ENCODE measurements at regions of chr19 and their contacts with region 1.

Region 1: DNA sequence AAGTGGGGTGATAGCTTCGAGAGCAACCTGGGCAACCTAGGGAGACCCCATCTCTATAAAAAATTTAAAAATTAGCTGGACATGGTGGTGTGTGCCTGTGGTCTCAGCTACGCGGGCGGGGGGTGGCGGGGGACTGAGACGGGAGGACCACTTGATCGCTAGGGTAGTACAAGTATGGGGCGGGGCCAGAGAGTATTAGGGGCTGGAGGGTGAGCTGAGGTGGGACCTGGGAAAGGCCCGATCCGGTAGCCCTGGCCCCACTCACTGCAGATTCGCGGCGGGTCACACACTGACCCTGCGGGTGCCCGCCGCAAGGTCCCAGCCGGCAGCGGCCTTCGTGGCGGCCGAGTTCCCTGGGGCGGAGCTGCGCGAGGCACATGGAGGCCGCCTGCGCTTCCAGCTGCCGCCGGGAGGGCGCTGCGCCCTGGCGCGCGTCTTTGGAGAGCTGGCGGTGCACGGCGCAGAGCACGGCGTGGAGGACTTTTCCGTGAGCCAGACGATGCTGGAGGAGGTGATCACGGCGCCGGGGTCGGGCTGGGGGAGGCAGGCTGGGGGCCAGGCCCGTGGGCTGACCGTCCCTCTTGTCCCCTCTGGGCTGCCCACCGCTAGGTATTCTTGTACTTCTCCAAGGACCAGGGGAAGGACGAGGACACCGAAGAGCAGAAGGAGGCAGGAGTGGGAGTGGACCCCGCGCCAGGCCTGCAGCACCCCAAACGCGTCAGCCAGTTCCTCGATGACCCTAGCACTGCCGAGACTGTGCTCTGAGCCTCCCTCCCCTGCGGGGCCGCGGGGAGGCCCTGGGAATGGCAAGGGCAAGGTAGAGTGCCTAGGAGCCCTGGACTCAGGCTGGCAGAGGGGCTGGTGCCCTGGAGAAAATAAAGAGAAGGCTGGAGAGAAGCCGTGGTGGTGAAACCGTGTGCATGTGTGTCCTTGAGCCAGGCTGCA is 2.0 kb upstream of the ARHGAP45 start:
- DNase-seq: peak; percentile 64 to 73 (median 71)
- H3K4me3 ChIP-seq: no peak overlapping the region
- H3K4me3 Mint-ChIP-seq: peak overlapping the region; percentile 57 to 78 (median 69)
- H3K27ac ChIP-seq: no peak overlapping the region
- H3K27ac Mint-ChIP-seq: peak overlapping the region; percentile 53 to 95 (median 86)
- H3K4me1 ChIP-seq: peaks cover 43% of the 10 kb centered on the region
- H3K4me1 Mint-ChIP-seq: peaks cover 21 to 56% (median 36%) of the 10 kb centered on the region in 4 donors
- H3K27me3 ChIP-seq: no peaks in the 10 kb centered on the region
- H3K27me3 Mint-ChIP-seq: no peaks in the 10 kb centered on the region

Region 2: GRCh38 chr19:1020868-1021425 is 44.0 kb before region 1 on chr19 and contains the start of gene TMEM259:
- CTCF ChIA-PET with region 1: interaction called, 10 read pairs
- POLR2A ChIA-PET with region 1: interaction called, 1,029 read pairs
- intact Hi-C with region 1: loop called (anchors 2 kb)
- DNase-seq: peak; percentile 98 to 99 (median 98)
- H3K4me3 ChIP-seq: peak within 1 kb of the TSS; percentile 66 to 69
- H3K4me3 Mint-ChIP-seq: peak within 1 kb of the TSS; percentile 86 to 92 (median 89)
- H3K27ac ChIP-seq: peak within 1 kb of the TSS; percentile 95
- H3K27ac Mint-ChIP-seq: peak within 1 kb of the TSS; percentile 97 to 100 (median 100)
- H3K4me1 ChIP-seq: peaks cover 54% of the 10 kb centered on the region
- H3K4me1 Mint-ChIP-seq: peaks cover 19 to 62% (median 39%) of the 10 kb centered on the region in 4 donors
- H3K27me3 ChIP-seq: no peaks in the 10 kb centered on the region
- H3K27me3 Mint-ChIP-seq: peaks cover 0 to 6% of the 10 kb centered on the region in 2 donors
- total RNA-seq, gene TMEM259: 315 to 329 TPM

Region 3: DNA sequence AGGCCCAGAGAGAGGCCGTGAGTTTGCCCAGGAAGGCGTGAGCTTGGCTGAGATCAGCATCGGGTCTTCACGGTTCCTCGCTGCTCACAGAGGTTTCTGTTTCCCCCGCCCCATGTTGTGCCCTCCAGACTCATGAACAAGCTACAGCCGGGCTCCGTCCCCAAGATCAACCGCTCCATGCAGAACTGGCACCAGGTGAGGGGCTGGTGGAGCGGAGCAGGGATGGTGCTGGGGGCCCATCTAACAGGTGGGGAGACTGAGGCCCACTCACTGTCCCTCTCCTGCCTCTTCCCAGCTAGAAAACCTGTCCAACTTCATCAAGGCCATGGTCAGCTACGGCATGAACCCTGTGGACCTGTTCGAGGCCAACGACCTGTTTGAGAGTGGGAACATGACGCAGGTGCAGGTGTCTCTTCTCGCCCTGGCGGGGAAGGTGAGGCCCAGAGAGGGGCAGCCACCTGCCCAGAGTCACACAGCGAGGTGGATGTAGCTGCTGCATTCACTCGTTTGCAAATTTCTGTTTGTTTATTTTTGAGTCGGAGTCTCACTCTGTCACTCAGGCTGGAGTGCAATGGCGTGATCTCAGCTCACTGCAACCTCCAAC is 32.6 kb before region 1 on chr19:
- CTCF ChIA-PET with region 1: interaction called, 12 read pairs
- POLR2A ChIA-PET with region 1: interaction called, 3,893 read pairs
- intact Hi-C with region 1: loop called (anchors 1 kb)
- DNase-seq: no peak
- H3K4me3 ChIP-seq: no peak overlapping the region
- H3K4me3 Mint-ChIP-seq: peak overlapping the region in 1 of 8 donors; percentile 15
- H3K27ac ChIP-seq: peak overlapping the region; percentile 9
- H3K27ac Mint-ChIP-seq: peak overlapping the region; percentile 36 to 89 (median 61)
- H3K4me1 ChIP-seq: peaks cover 64% of the 10 kb centered on the region
- H3K4me1 Mint-ChIP-seq: peaks cover 19 to 63% (median 38%) of the 10 kb centered on the region in 4 donors
- H3K27me3 ChIP-seq: no peaks in the 10 kb centered on the region
- H3K27me3 Mint-ChIP-seq: no peaks in the 10 kb centered on the region

Region 4: DNA sequence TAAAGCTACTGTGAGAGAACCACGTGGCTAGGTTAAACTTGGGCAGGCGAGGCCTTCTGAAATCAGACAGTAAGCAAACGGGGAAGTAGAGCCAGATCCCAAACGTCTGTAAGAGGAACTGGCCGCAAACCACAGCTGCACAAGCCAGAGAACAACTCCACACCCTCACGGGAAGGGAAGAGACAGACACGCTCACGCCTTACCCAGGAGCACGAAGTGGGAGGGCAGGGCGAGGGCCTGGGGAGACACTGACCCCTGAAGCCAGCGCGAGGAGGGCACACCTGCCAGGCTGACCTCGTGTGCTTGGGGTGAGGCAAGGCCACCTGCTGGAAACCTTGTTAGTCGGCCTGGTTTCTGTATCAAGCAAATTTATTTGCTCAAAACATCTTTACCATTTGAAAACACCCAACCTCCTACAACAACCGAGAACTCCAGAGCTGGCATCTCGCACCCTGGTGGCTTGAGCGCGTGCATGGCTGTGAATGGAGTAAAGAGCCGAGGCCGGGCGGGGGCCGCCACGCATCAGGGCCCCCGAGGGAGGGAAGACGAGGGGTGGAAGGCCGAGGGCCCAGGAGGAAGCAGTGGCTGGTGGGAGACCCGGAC is 23.0 kb after region 1 on chr19:
- CTCF ChIA-PET with region 1: interaction called, 219 read pairs
- POLR2A ChIA-PET with region 1: interaction called, 3,893 read pairs
- intact Hi-C with region 1: loop called (anchors 1 kb)
- DNase-seq: peak; percentile 59 to 78 (median 65)
- H3K4me3 ChIP-seq: no peak overlapping the region
- H3K4me3 Mint-ChIP-seq: peak overlapping the region in 5 of 8 donors; percentile 25 to 82 (median 69)
- H3K27ac ChIP-seq: peak overlapping the region; percentile 74
- H3K27ac Mint-ChIP-seq: peak overlapping the region; percentile 72 to 97 (median 93)
- H3K4me1 ChIP-seq: peaks cover 64% of the 10 kb centered on the region
- H3K4me1 Mint-ChIP-seq: peaks cover 14 to 67% (median 32%) of the 10 kb centered on the region in 4 donors
- H3K27me3 ChIP-seq: no peaks in the 10 kb centered on the region
- H3K27me3 Mint-ChIP-seq: no peaks in the 10 kb centered on the region

Region 5: DNA sequence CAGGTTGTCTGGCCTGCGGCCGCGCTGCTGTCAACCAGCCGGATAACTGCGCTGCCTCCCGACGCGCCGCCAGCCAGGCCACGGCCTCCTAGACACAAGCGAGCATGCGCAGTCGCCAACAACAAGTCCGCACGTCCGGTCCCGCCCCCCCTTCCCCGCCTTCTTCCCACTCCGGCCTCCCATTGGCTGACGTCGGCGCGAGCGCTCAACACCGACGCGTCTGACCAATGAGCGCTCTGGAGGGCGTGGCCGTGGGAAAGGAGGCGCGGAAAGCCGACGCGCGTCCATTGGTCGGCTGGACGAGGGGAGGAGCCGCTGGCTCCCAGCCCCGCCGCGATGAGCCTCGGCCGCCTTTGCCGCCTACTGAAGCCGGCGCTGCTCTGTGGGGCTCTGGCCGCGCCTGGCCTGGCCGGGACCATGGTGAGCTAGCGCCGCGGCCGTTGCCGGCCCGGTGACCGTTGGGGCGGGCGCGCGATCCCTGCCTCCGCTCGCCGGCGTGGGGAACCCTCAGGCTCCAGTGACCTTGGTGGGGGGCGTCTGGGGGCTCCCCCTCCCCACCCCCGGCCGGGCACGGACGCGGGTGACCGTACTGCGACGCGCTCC is 38.9 kb after region 1 on chr19 and contains the start of gene GPX4:
- CTCF ChIA-PET with region 1: interaction called, 4 read pairs
- POLR2A ChIA-PET with region 1: interaction called, 3,893 read pairs
- intact Hi-C with region 1: loop called (anchors 1 kb)
- DNase-seq: peak; percentile 94 to 98 (median 97)
- H3K4me3 ChIP-seq: peak within 1 kb of the TSS; percentile 47 to 76
- H3K4me3 Mint-ChIP-seq: peak within 1 kb of the TSS; percentile 73 to 86 (median 77)
- H3K27ac ChIP-seq: peak within 1 kb of the TSS; percentile 96
- H3K27ac Mint-ChIP-seq: peak within 1 kb of the TSS; percentile 92 to 97 (median 96)
- H3K4me1 ChIP-seq: peaks cover 43% of the 10 kb centered on the region
- H3K4me1 Mint-ChIP-seq: peaks cover 14 to 51% (median 33%) of the 10 kb centered on the region in 4 donors
- H3K27me3 ChIP-seq: no peaks in the 10 kb centered on the region
- H3K27me3 Mint-ChIP-seq: no peaks in the 10 kb centered on the region
- total RNA-seq, gene GPX4: 210 to 220 TPM

Region 6: DNA sequence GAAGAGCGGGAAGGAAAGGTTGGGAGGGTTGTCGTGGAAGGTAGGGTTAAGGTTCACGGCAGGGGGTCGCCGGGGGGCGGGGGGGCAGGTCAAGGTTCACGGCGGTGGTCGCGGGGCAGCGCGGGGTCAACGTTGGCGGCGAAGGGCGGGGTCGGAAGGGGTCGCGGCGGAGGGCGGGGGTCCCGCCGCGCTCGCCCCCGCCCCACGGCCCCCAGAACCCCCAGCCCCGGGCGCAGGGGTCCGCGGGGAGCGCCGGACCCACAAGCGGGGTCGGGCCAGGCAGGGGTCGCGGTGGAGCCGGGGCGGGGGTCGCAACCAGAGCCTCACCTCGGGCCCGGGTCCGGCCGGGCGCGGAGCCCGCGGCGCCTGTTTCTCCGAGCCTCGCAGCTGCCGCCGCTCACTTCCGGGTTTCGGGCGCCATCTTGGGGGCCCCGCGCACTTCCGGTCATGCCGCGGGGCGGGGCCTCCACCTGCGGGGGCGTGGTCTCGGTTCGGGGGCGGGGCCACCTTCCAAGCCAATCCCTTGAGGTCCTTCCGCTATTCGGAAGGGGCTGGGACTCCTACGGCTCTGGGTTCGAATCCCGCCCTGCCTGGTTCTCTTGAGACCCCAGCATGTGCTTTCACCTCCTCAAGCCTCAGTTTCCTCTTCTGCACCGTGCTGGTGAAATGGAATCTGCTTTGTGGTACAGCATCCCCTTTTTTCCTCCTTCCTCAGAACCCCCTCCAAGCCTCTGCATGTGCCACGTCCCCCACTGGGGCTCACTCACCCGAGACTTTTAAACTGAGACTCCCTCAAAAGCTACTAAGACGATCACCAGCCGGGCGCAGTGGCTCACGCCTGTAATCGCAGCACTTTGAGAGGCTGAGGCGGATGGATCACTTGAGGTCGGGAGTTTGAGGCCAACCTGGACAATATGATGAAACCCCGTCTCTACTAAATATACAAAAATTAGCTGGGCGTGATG is 109.2 kb after region 1 on chr19 and contains the start of gene SBNO2:
- CTCF ChIA-PET with region 1: no interaction called
- POLR2A ChIA-PET with region 1: interaction called, 12 read pairs
- intact Hi-C with region 1: no loop called
- DNase-seq: peak; percentile 81 to 90 (median 87)
- H3K4me3 ChIP-seq: peak within 1 kb of the TSS; percentile 42 to 73
- H3K4me3 Mint-ChIP-seq: peak within 1 kb of the TSS; percentile 89 to 93 (median 90)
- H3K27ac ChIP-seq: peak within 1 kb of the TSS; percentile 65
- H3K27ac Mint-ChIP-seq: peak within 1 kb of the TSS; percentile 87 to 97 (median 94)
- H3K4me1 ChIP-seq: peaks cover 42% of the 10 kb centered on the region
- H3K4me1 Mint-ChIP-seq: peaks cover 16 to 37% (median 27%) of the 10 kb centered on the region in 4 donors
- H3K27me3 ChIP-seq: no peaks in the 10 kb centered on the region
- H3K27me3 Mint-ChIP-seq: no peaks in the 10 kb centered on the region
- total RNA-seq, gene SBNO2: 92.6 to 98.6 TPM

Region 7: GRCh38 chr19:1249298-1249989 is 184.5 kb after region 1 on chr19:
- CTCF ChIA-PET with region 1: interaction called, 3 read pairs
- POLR2A ChIA-PET with region 1: interaction called, 13 read pairs
- intact Hi-C with region 1: no loop called
- DNase-seq: peak; percentile 92 to 97 (median 95)
- H3K4me3 ChIP-seq: peak overlapping the region in 1 of 2 donors; percentile 77
- H3K4me3 Mint-ChIP-seq: peak overlapping the region; percentile 83 to 94 (median 90)
- H3K27ac ChIP-seq: peak overlapping the region; percentile 92
- H3K27ac Mint-ChIP-seq: peak overlapping the region; percentile 89 to 94 (median 91)
- H3K4me1 ChIP-seq: peaks cover 33% of the 10 kb centered on the region
- H3K4me1 Mint-ChIP-seq: peaks cover 2 to 26% (median 9%) of the 10 kb centered on the region in 4 donors
- H3K27me3 ChIP-seq: no peaks in the 10 kb centered on the region
- H3K27me3 Mint-ChIP-seq: no peaks in the 10 kb centered on the region

Region 8: GRCh38 chr19:1478934-1479707 is 414.2 kb after region 1 on chr19 and contains the start of gene C19orf25:
- CTCF ChIA-PET with region 1: no interaction called
- POLR2A ChIA-PET with region 1: no interaction called
- intact Hi-C with region 1: no loop called
- DNase-seq: peak; percentile 87 to 91 (median 89)
- H3K4me3 ChIP-seq: peak within 1 kb of the TSS; percentile 46 to 52
- H3K4me3 Mint-ChIP-seq: peak within 1 kb of the TSS; percentile 97 to 100 (median 98)
- H3K27ac ChIP-seq: peak within 1 kb of the TSS; percentile 76
- H3K27ac Mint-ChIP-seq: peak within 1 kb of the TSS; percentile 87 to 99 (median 97)
- H3K4me1 ChIP-seq: peaks cover 14% of the 10 kb centered on the region
- H3K4me1 Mint-ChIP-seq: peaks cover 6 to 32% (median 14%) of the 10 kb centered on the region in 4 donors
- H3K27me3 ChIP-seq: no peaks in the 10 kb centered on the region
- H3K27me3 Mint-ChIP-seq: no peaks in the 10 kb centered on the region
- total RNA-seq, gene C19orf25: 68.8 to 79.8 TPM